Heart left ventricle (tissue), 16 donors: ENCODE measurements at regions of chr17 and their contacts with region 1.

Region 1: DNA sequence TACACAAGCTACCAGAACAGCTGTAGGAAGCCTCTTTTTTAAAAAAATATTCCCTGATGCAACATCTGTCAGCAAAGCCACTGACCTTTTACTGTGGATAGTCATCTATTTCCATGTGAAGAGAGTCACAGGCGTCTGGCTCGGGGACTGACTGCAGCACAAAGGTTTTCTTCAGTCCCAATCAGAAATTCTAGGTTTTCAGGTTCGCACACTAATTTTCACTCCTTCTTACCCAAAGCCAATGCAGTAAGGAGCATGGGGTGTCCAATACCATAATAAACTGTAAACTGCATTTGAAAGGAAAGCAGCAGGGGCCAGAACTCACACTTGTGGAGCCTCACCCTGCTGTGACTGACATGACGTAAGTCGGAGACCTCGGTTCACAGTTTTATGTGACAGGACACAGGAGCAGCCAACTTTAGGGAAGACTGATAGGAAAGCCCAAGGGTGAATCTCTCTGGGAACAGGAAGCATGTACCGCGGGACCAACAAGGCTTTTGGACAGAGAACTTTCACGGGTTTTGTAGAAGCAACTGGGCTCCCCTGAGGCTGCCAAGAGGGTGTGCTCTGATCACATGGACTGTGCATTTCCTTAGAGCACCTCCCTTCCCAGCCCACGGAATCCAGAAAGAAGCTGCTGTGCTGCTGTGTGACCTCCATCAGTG is 9.1 kb upstream of the TMEM100 start:
- DNase-seq: peak; percentile 71 to 85 (median 79)
- ATAC-seq: peak; percentile 79 to 90 (median 88)
- H3K4me3 ChIP-seq: peak overlapping the region in 11 of 12 donors; percentile 9 to 48 (median 40)
- H3K27ac ChIP-seq: peak overlapping the region; percentile 68 to 93 (median 84)
- H3K4me1 ChIP-seq: peaks cover 0 to 40% (median 25%) of the 10 kb centered on the region in 12 donors
- H3K27me3 ChIP-seq: no peaks in the 10 kb centered on the region
- CTCF ChIP-seq: no peak
- POLR2A ChIP-seq: peak in 1 of 2 donors; percentile 10

Region 2: DNA sequence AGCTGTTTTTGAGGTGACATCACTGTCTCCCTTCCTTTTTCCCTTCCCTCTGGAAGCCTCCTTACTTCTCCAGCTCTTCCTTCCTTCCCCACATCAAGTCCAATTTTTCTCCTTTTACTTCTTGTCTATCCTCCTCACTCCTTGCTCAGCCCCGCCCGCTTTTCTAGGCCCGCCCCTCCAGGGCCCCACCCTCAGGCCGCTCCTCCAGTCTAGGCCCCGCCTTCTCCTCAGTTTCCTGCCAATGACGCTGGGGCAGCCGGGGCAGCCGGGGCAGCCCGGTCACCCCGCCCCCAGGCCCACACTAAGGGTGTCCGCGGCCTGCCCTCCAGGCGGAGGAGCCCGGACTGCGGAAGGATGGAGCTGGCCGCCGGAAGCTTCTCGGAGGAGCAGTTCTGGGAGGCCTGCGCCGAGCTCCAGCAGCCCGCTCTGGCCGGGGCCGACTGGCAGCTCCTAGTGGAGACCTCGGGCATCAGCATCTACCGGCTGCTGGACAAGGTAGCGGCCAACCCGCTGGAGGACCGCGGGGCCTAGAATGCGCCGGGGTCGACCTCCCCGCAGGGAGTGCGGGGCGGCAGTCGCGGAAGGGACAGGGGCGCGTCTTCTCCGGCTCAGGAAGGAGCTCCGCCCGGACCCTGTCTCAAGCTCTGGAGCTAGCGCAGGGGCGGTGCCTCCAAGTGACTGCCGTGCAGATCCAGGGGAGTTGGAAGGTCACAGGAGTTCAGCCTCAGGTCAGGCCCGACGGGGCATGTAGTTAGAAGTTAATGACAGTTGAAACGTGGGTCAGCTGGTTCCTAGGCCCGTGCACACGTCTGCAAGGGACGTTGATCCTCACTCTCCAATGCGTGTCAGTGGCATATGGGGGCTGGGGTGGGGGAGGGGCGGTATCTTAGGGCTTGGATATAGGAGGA is 19.3 kb after region 1 on chr17 and contains the start of gene PCTP:
- intact Hi-C with region 1: loop called in 2 of 10 experiments (anchors 2 kb)
- DNase-seq: peak; percentile 94 to 98 (median 97)
- ATAC-seq: peak; percentile 99 to 100 (median 100)
- H3K4me3 ChIP-seq: peak within 1 kb of the TSS; percentile 58 to 96 (median 88)
- H3K27ac ChIP-seq: peak within 1 kb of the TSS; percentile 82 to 98 (median 92)
- H3K4me1 ChIP-seq: peaks cover 0 to 20% (median 13%) of the 10 kb centered on the region in 12 donors
- H3K27me3 ChIP-seq: no peaks in the 10 kb centered on the region
- CTCF ChIP-seq: peak in 11 of 12 donors; percentile 17 to 64 (median 34)
- POLR2A ChIP-seq: peak in 1 of 2 donors; percentile 89
- total RNA-seq, gene PCTP: 14.8 to 22.6 (median 18.6) TPM